ENCODE measurements at regions of chr2 and their contacts with region 1.

Region 1: DNA sequence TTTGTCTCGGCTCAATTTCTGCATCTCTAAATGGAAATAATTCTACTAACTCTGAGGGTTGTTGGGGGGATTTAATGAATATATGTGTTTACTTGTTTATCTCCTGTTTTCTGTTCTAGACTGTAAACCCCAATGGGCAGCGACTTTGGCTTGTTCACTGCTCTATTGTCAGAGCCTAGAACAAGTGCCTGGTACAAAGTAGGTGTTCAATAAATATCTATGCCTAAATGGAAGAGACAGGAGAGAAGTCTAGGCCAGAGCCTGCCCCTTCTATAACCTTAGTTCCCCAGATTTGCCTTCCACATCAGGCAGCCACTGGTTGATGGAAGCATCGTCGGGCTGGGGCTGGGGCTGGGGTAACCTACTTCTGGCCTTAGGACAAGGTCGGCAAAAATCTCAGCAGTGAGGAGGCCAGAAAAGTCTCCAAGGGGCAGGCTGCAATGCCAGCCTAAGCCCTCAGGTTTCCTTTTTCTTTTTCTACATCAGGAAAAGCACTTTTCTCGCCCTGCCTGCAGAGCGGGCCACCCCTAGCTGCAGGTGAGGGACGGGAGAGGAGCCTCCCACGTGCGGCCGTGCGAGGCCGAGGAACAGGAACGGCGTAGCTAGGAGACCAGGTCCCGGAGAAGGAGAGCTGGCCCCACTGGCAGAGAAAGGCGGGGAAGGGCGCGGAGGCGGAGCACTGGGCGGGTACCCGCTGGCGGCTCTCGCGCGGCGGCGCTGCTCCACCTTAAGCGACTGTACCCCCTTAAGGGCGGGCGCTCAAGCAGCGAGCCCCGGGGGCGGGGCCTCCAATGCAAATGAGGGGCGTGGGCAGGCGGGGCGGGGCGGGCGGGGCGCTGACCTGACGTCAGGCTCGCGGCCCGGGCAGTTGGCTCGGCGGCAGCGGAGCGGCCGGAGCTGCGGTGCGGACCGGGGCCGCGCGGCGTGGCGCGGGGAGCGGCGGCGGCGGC is at the start of gene CNNM4:
- DNase-seq: peak; percentile 79 to 95 (median 92)
- ATAC-seq: peak; percentile 94
- H3K4me3 ChIP-seq: peak within 1 kb of the TSS; percentile 67 to 95
- H3K4me3 Mint-ChIP-seq: peak within 1 kb of the TSS; percentile 87
- H3K27ac ChIP-seq: peak within 1 kb of the TSS; percentile 60 to 73
- H3K27ac Mint-ChIP-seq: peak within 1 kb of the TSS; percentile 92
- H3K4me1 ChIP-seq: peaks cover 50% of the 10 kb centered on the region
- H3K4me1 Mint-ChIP-seq: peaks cover 54% of the 10 kb centered on the region
- H3K27me3 ChIP-seq: no peaks in the 10 kb centered on the region
- H3K27me3 Mint-ChIP-seq: no peaks in the 10 kb centered on the region
- CTCF ChIP-seq: no peak
- total RNA-seq, gene CNNM4: 6.7 to 8.3 TPM

Region 2: DNA sequence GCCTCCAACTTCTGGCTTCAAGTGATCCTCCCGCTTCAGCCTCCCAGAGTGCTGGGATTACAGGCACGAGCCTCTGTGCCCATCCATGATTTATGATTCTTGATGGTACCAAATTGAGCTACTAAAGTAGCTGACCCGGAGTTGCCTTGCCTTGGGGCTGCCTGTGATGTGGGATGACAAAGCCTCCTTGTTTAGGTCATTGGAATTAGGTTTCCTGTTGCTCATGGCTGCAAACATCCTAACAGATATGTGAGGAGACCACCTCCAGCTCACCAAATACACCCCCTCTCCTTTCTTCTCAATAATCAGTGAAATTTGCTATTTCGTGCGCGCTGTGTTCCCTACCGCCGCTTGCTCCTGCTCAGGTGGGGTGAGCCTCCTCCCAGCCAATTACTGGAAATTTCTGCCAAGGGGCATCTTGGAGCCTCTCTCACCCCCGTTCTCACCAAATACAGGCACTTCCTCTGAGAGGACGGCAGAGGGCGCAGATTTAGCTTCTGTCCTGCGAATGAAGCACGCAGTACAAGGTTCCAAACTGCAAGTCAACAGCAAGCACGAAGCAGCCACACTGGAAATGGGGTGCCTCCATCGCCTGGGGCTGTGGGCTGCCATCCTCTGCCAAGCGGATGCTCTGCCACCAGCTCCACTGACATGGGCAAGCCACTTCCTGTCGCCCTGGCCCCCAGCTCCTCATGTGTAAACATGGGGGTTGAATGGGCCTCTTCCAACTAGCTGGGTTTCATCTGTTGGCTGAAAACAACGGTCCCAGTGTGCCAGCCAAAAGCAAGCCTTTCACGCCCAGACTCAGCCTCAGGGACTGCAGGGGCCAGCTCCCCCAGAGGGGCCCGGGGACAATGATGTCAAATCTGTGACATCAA is 353.0 kb before region 1 on chr2:
- CTCF ChIA-PET with region 1: no interaction called
- POLR2A ChIA-PET with region 1: no interaction called
- intact Hi-C with region 1: no loop called
- DNase-seq: peak; percentile 55 to 94 (median 79)
- ATAC-seq: peak; percentile 93
- H3K4me3 ChIP-seq: peak overlapping the region in 1 of 2 experiments; percentile 33
- H3K4me3 Mint-ChIP-seq: peak overlapping the region; percentile 72
- H3K27ac ChIP-seq: peak overlapping the region; percentile 48 to 58
- H3K27ac Mint-ChIP-seq: peak overlapping the region; percentile 97
- H3K4me1 ChIP-seq: peaks cover 36% of the 10 kb centered on the region
- H3K4me1 Mint-ChIP-seq: peaks cover 51% of the 10 kb centered on the region
- H3K27me3 ChIP-seq: no peaks in the 10 kb centered on the region
- H3K27me3 Mint-ChIP-seq: no peaks in the 10 kb centered on the region
- CTCF ChIP-seq: peak; percentile 71

Region 3: GRCh38 chr2:96574364-96574763 is 185.9 kb before region 1 on chr2:
- CTCF ChIA-PET with region 1: no interaction called
- POLR2A ChIA-PET with region 1: no interaction called
- intact Hi-C with region 1: no loop called
- DNase-seq: no peak
- ATAC-seq: no peak
- H3K4me3 ChIP-seq: no peak overlapping the region
- H3K4me3 Mint-ChIP-seq: no peak overlapping the region
- H3K27ac ChIP-seq: no peak overlapping the region
- H3K27ac Mint-ChIP-seq: no peak overlapping the region
- H3K4me1 ChIP-seq: no peaks in the 10 kb centered on the region
- H3K4me1 Mint-ChIP-seq: no peaks in the 10 kb centered on the region
- H3K27me3 ChIP-seq: no peaks in the 10 kb centered on the region
- H3K27me3 Mint-ChIP-seq: no peaks in the 10 kb centered on the region
- CTCF ChIP-seq: no peak

Region 4: GRCh38 chr2:96638144-96639121 is 121.9 kb before region 1 on chr2 and contains the start of gene KANSL3:
- CTCF ChIA-PET with region 1: interaction called, 4 read pairs
- POLR2A ChIA-PET with region 1: interaction called, 3 read pairs
- intact Hi-C with region 1: loop called (anchors 1 kb)
- DNase-seq: peak; percentile 79 to 95 (median 88)
- ATAC-seq: peak; percentile 85
- H3K4me3 ChIP-seq: peak within 1 kb of the TSS; percentile 71 to 95
- H3K4me3 Mint-ChIP-seq: peak within 1 kb of the TSS; percentile 93
- H3K27ac ChIP-seq: peak within 1 kb of the TSS; percentile 83 to 91
- H3K27ac Mint-ChIP-seq: peak within 1 kb of the TSS; percentile 96
- H3K4me1 ChIP-seq: peaks cover 24% of the 10 kb centered on the region
- H3K4me1 Mint-ChIP-seq: peaks cover 32% of the 10 kb centered on the region
- H3K27me3 ChIP-seq: no peaks in the 10 kb centered on the region
- H3K27me3 Mint-ChIP-seq: peaks cover 2% of the 10 kb centered on the region
- CTCF ChIP-seq: no peak
- total RNA-seq, gene KANSL3: 58.8 to 60.4 TPM

Region 5: DNA sequence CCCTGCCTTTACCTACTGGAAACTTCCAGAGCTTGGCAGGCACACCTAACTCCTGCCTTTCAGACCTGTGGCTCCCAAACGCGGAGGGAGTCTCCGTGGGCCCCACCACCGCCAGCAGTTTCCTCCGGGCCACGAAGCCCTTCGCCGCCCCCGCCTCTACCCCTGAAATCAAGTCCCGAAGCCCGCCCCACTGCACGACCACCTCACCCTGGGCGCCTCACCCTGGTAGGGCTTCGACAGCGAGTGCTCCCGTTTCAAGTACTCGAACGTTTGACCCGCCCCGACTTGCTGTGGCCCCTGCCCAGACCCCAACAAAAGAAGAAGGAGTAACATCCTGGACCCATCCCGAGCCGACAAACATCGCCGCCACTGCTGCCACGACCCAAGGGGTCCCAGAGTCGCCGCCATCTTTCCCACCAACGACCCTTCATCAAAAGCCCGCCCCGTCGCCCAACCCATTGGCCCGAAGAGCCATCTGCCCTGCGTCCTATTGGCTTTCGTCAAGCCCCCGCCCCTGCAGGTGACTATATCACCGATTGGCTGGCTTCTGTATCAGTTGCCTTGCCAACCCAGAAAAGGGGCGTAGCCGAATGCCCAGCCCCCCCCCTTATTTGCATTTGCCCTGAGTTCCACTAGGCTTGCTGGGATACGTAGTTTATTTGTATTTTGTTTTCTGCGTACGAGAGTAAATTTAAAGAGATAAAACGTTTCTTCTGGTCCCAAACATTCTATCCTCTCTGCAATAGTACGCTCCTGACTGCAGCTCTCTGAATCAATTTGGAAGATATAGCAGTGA is 20.5 kb before region 1 on chr2 and contains the start of gene LMAN2L:
- CTCF ChIA-PET with region 1: interaction called, 7 read pairs
- POLR2A ChIA-PET with region 1: no interaction called
- intact Hi-C with region 1: loop called (anchors 1 kb)
- DNase-seq: peak; percentile 92 to 99 (median 96)
- ATAC-seq: peak; percentile 98
- H3K4me3 ChIP-seq: peak within 1 kb of the TSS; percentile 60 to 98
- H3K4me3 Mint-ChIP-seq: peak within 1 kb of the TSS; percentile 97
- H3K27ac ChIP-seq: peak within 1 kb of the TSS; percentile 46 to 73
- H3K27ac Mint-ChIP-seq: peak within 1 kb of the TSS; percentile 91
- H3K4me1 ChIP-seq: peaks cover 13% of the 10 kb centered on the region
- H3K4me1 Mint-ChIP-seq: peaks cover 38% of the 10 kb centered on the region
- H3K27me3 ChIP-seq: no peaks in the 10 kb centered on the region
- H3K27me3 Mint-ChIP-seq: no peaks in the 10 kb centered on the region
- CTCF ChIP-seq: no peak
- total RNA-seq, gene LMAN2L: 1.1 to 1.7 TPM

Region 6: GRCh38 chr2:96773922-96774321 is 13.6 kb after region 1 on chr2:
- CTCF ChIA-PET with region 1: interaction called, 25 read pairs
- POLR2A ChIA-PET with region 1: interaction called, 10 read pairs
- intact Hi-C with region 1: loop called in 1 of 2 experiments (anchors 2 kb)
- DNase-seq: peak in 8 of 9 experiments; percentile 28 to 84 (median 56)
- ATAC-seq: peak; percentile 81
- H3K4me3 ChIP-seq: peak overlapping the region; percentile 60 to 67
- H3K4me3 Mint-ChIP-seq: peak overlapping the region; percentile 94
- H3K27ac ChIP-seq: peak overlapping the region; percentile 32 to 78
- H3K27ac Mint-ChIP-seq: peak overlapping the region; percentile 94
- H3K4me1 ChIP-seq: peaks cover 19% of the 10 kb centered on the region
- H3K4me1 Mint-ChIP-seq: peaks cover 26% of the 10 kb centered on the region
- H3K27me3 ChIP-seq: no peaks in the 10 kb centered on the region
- H3K27me3 Mint-ChIP-seq: no peaks in the 10 kb centered on the region
- CTCF ChIP-seq: no peak

Region 7: DNA sequence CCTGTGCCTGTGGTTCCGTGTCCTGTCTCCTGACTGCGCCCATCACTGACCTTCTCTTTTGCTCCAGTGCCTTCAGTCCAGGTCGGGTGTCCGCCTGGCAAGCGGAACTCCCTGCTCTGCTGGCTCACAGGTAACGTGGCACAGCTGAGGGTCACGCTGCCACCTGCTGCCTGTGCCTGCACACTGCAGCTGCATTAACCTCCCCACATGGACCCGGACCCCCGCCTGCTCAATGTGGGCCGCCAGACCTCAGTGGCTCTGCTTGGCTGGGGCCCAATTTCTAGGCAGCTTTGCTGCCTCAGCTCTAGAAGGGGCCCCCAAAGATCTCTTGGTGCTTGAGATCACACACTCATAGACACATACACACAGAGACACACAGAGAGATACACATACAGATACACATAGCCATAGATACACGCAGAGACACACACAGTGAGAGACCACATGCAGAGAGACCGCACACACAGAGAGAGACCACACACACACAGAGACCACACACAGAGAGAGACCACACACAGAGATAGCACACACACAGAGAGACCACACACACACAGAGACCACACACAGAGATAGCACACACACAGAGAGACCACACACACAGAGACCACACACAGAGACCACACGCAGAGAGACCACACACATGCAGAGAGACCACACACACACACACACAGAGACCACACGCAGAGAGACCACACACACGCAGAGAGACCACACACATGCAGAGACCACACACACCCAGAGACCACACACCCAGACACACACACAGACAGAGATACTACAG is 40.9 kb after region 1 on chr2:
- CTCF ChIA-PET with region 1: interaction called, 10 read pairs
- POLR2A ChIA-PET with region 1: interaction called, 3 read pairs
- intact Hi-C with region 1: loop called (anchors 2 kb)
- DNase-seq: peak; percentile 44 to 83 (median 72)
- ATAC-seq: peak; percentile 100
- H3K4me3 ChIP-seq: no peak overlapping the region
- H3K4me3 Mint-ChIP-seq: no peak overlapping the region
- H3K27ac ChIP-seq: no peak overlapping the region
- H3K27ac Mint-ChIP-seq: no peak overlapping the region
- H3K4me1 ChIP-seq: peaks cover 6% of the 10 kb centered on the region
- H3K4me1 Mint-ChIP-seq: peaks cover 5% of the 10 kb centered on the region
- H3K27me3 ChIP-seq: no peaks in the 10 kb centered on the region
- H3K27me3 Mint-ChIP-seq: no peaks in the 10 kb centered on the region
- CTCF ChIP-seq: peak; percentile 64

Measured in CD8-positive, alpha-beta T cell (primary cell).